ENCODE measurements at regions of chr14 and their contacts with region 1.

Region 1: GRCh38 chr14:22556990-22557623 is 31.9 kb downstream of the DAD1 start:
- DNase-seq: peak; percentile 67
- H3K4me3 ChIP-seq: peak overlapping the region in 2 of 3 experiments; percentile 27 to 41
- H3K27ac ChIP-seq: peak overlapping the region; percentile 48
- H3K4me1 ChIP-seq: peaks cover 28% of the 10 kb centered on the region
- H3K27me3 ChIP-seq: no peaks in the 10 kb centered on the region
- CTCF ChIP-seq: peak; percentile 85

Region 2: GRCh38 chr14:22221508-22221907 is 335.6 kb before region 1 on chr14:
- CTCF ChIA-PET with region 1: interaction called, 5 read pairs
- dilution Hi-C with region 1: no loop called
- in situ Hi-C with region 1: no loop called
- intact Hi-C with region 1: loop called (anchors 5 kb)
- DNase-seq: peak; percentile 13
- H3K4me3 ChIP-seq: no peak overlapping the region
- H3K27ac ChIP-seq: no peak overlapping the region
- H3K4me1 ChIP-seq: peaks cover 9% of the 10 kb centered on the region
- H3K27me3 ChIP-seq: no peaks in the 10 kb centered on the region
- CTCF ChIP-seq: peak; percentile 34 to 49

Region 3: DNA sequence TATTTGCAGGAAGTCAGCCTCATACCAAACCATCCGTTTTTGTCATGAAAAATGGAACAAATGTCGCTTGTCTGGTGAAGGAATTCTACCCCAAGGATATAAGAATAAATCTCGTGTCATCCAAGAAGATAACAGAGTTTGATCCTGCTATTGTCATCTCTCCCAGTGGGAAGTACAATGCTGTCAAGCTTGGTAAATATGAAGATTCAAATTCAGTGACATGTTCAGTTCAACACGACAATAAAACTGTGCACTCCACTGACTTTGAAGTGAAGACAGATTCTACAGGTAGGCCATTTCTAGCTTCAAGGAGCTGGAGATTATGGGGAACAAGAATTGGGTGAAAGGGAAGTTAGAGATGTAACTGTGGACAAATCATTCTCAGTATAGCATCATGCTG is 94.2 kb before region 1 on chr14:
- CTCF ChIA-PET with region 1: no interaction called
- dilution Hi-C with region 1: no loop called
- in situ Hi-C with region 1: no loop called
- intact Hi-C with region 1: no loop called
- DNase-seq: no peak
- H3K4me3 ChIP-seq: no peak overlapping the region
- H3K27ac ChIP-seq: no peak overlapping the region
- H3K4me1 ChIP-seq: peaks cover 7% of the 10 kb centered on the region
- H3K27me3 ChIP-seq: no peaks in the 10 kb centered on the region
- CTCF ChIP-seq: no peak

Region 4: DNA sequence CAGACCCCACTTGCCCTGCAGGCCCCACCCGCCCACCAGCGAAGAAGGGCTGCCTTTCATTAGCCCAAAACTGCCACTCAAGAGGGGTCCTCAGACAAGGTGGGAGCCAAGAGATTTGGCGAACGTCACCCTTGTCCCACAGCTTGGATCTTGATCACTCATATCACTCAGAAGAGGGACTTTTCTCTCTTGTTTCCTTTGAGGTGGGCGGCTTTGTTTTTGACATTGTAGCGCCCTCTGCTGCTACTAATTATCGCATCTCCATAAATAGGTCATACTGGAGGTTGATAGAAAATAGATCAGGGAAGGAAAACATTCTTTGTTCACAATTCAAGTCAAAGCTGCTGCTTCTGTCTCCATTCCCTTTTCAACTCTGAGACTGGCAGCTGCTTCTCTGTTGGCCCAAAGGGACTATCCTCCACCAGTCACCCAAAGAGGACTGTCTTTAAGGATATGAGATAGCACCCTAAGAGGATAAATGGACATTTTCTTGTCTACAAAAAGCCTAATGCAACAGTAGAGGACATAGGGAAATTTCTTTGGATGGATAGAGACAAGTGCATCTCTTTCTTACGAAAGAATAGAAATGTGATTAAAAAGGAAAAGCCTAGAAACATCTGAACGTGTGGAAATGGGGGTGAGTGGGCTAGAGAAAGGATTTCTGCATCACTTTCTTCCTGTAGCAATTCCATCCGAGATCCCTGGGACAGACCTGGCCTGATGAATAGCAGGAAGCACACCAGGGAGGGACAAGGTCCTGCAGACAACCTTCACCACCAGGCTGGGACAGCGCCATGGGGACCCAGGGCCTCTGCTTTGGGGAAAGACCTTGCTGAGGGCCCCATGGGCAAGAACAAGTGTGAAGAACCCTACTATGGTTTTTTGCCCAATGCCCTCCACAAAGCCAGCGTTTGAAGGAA is 83.9 kb before region 1 on chr14:
- CTCF ChIA-PET with region 1: no interaction called
- dilution Hi-C with region 1: no loop called
- in situ Hi-C with region 1: no loop called
- intact Hi-C with region 1: loop called (anchors 2 kb)
- DNase-seq: peak; percentile 39
- H3K4me3 ChIP-seq: no peak overlapping the region
- H3K27ac ChIP-seq: no peak overlapping the region
- H3K4me1 ChIP-seq: no peaks in the 10 kb centered on the region
- H3K27me3 ChIP-seq: peaks cover 5% of the 10 kb centered on the region
- CTCF ChIP-seq: peak; percentile 52 to 65

Region 5: DNA sequence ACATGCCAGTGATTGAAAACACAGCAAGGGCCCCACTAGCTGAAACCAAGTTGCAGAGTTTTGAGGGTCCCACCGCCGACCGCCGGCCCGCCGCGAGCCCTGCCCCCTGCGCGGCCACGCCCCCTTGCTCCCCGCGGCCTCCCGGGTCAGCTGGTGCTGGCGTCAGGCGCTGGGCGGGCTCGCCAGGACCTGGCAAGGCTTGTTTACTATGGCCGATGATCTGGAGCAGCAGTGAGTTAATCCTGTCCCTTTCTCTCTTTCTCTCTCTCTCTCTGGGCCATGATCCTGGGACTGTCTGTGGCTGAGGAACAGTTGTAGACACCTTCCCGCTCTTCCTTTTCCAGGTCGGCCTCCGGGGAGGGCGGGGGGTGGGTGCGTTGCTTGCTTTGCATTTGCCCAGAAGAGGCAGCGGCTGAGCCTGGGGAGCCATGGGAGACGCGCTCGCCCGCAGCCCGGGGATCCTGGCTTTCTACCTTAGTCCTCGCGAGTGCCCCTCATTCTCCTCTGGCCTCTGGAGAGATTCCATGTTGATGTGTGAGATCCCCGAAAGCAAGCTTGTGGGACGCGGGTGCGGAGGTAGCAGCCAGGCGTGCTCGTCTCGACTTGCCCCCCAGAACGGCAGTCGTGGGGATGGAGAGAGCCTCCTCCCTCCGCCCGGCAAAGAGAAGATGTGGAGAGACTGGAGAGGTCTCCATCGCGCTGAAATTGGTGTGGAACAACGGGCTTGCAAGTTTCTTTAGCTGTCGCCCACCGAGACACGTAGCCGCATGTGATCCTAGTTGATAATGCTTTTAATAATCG is 41.2 kb after region 1 on chr14 and contains the start of gene ABHD4:
- CTCF ChIA-PET with region 1: no interaction called
- dilution Hi-C with region 1: no loop called
- in situ Hi-C with region 1: no loop called
- intact Hi-C with region 1: no loop called
- DNase-seq: peak; percentile 65
- H3K4me3 ChIP-seq: peak within 1 kb of the TSS; percentile 77 to 91 (median 90)
- H3K27ac ChIP-seq: peak within 1 kb of the TSS; percentile 85
- H3K4me1 ChIP-seq: peaks cover 28% of the 10 kb centered on the region
- H3K27me3 ChIP-seq: no peaks in the 10 kb centered on the region
- CTCF ChIP-seq: no peak
- total RNA-seq, gene ABHD4: 16.7 to 20.5 TPM

Region 6: GRCh38 chr14:22641846-22642245 is 84.7 kb after region 1 on chr14:
- CTCF ChIA-PET with region 1: no interaction called
- dilution Hi-C with region 1: no loop called
- in situ Hi-C with region 1: no loop called
- intact Hi-C with region 1: loop called (anchors 1 kb)
- DNase-seq: peak; percentile 32
- H3K4me3 ChIP-seq: no peak overlapping the region
- H3K27ac ChIP-seq: no peak overlapping the region
- H3K4me1 ChIP-seq: peaks cover 10% of the 10 kb centered on the region
- H3K27me3 ChIP-seq: no peaks in the 10 kb centered on the region
- CTCF ChIP-seq: no peak

Region 7: GRCh38 chr14:22713631-22713950 is 156.5 kb after region 1 on chr14:
- CTCF ChIA-PET with region 1: no interaction called
- dilution Hi-C with region 1: no loop called
- in situ Hi-C with region 1: no loop called
- intact Hi-C with region 1: loop called (anchors 2 kb)
- DNase-seq: no peak
- H3K4me3 ChIP-seq: no peak overlapping the region
- H3K27ac ChIP-seq: no peak overlapping the region
- H3K4me1 ChIP-seq: no peaks in the 10 kb centered on the region
- H3K27me3 ChIP-seq: no peaks in the 10 kb centered on the region
- CTCF ChIP-seq: no peak

Region 8: GRCh38 chr14:22836301-22837113 is 279.4 kb after region 1 on chr14 and contains the start of gene MMP14:
- CTCF ChIA-PET with region 1: interaction called, 4 read pairs
- dilution Hi-C with region 1: no loop called
- in situ Hi-C with region 1: loop called in 1 of 2 experiments (anchors 25 kb)
- intact Hi-C with region 1: loop called (anchors 5 kb)
- DNase-seq: peak; percentile 86
- H3K4me3 ChIP-seq: peak within 1 kb of the TSS; percentile 84 to 94 (median 86)
- H3K27ac ChIP-seq: peak within 1 kb of the TSS; percentile 86
- H3K4me1 ChIP-seq: peaks cover 24% of the 10 kb centered on the region
- H3K27me3 ChIP-seq: no peaks in the 10 kb centered on the region
- CTCF ChIP-seq: peak in 1 of 2 donors; percentile 57
- total RNA-seq, gene MMP14: 525 to 766 TPM

Region 9: DNA sequence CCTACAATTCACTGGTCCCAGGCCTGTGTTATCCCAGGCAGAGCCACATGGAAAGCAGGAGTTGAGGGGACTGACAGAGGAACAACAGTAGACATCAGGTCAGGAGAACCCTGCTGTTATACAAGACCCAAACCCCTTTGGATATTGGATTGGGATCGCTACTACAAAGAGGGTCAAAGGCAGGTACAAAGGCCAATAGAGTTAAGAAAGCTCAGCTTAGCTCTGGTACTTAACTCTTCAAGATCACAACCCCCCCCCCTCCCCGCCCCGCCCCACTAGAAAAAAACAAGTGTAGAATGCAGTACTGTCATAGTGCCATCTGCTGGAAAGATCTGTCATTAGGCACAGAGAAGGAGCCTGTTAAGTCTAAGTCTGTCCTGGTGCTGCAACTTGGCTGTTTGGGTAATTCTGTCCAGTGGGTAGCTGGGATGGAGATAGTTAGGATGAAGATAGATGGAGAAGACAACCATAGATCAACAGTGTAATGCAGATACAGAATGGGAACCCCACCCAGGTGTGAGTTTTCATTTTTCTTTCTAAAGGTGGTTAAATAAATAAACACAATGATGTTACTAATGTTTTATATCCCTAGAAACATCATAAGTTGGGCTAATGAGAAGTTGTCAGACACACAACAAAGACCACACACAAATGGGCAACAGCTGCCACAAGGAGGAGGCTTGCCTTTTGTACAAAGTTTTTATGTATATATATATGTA is 343.1 kb after region 1 on chr14:
- CTCF ChIA-PET with region 1: interaction called, 4 read pairs
- dilution Hi-C with region 1: no loop called
- in situ Hi-C with region 1: no loop called
- intact Hi-C with region 1: loop called (anchors 1 kb)
- DNase-seq: peak; percentile 56
- H3K4me3 ChIP-seq: no peak overlapping the region
- H3K27ac ChIP-seq: no peak overlapping the region
- H3K4me1 ChIP-seq: peaks cover 20% of the 10 kb centered on the region
- H3K27me3 ChIP-seq: no peaks in the 10 kb centered on the region
- CTCF ChIP-seq: peak; percentile 66 to 68